Heart right ventricle (tissue), 16 donors: ENCODE measurements at regions of chr2 and their contacts with region 1.

Region 1: DNA sequence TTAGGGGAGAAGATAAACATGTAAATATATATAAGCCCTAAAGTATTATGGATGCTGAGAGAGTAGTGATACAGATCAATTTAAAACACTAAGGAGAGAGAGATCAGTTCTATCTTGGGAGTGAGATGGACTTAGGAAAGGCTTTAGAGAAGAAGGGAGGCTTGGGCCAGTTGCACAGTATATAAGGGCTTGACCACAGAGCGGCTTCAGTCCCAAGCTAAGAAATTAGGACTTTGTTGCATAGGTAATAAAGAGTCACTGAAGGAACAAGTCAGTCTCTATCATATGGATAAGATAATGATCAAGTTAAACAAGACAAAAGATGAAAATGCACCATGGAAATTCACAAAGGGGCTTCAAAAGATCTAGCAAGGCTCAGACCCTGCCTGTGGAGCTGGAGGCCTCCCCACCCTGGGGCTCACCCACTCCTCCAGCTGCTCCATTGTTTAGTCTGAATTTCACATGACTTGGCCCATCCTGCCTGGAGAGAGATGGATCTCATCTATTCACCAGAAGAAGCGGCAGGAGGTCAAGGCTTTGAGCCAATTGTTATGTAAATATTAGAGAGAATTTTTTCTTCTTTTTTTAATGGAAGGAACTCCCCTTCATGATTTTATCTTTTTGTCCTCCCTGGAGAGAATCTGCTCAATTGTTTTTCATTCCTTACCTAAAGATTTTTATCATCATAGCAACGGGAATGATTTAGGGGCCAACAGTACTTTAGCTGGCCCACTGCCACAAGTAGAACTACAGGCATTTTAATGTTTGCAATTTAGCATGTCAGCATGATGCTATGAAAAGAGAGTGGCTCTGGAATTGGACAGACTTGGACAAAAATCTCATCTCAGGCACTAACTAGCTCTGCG is 44.0 kb downstream of the GYPC start:
- DNase-seq: peak in 1 of 2 donors; percentile 51
- ATAC-seq: peak in 6 of 8 donors; percentile 43 to 81 (median 62)
- H3K4me3 ChIP-seq: no peak overlapping the region
- H3K27ac ChIP-seq: peak overlapping the region in 8 of 10 donors; percentile 35 to 80 (median 58)
- H3K4me1 ChIP-seq: peaks cover 8 to 79% (median 33%) of the 10 kb centered on the region in 9 donors
- H3K27me3 ChIP-seq: no peaks in the 10 kb centered on the region
- CTCF ChIP-seq: no peak

Region 2: DNA sequence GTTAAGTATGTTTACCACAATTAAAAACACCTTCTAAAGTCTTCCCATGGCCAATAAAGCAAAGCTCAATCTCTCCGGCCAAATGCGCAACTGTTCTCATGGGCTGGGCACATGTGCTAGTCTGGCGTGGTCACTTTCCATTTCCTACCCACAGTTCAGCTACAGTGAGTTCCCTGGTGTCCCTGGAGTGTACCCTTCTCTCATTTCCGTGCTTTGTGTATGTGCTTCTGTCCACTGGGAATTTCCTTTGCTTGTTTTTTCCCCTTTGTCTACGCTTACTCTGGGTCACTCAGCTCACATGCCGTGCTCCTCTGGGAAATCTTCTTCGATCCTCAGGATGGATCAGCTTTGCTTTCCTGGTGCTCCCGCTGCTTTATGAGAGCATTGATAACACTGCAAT is 113.6 kb before region 1 on chr2:
- intact Hi-C with region 1: loop called in 1 of 10 experiments (anchors 1 kb)
- DNase-seq: peak in 1 of 2 donors; percentile 61
- ATAC-seq: peak; percentile 82 to 99 (median 93)
- H3K4me3 ChIP-seq: no peak overlapping the region
- H3K27ac ChIP-seq: peak overlapping the region in 9 of 10 donors; percentile 32 to 80 (median 68)
- H3K4me1 ChIP-seq: peaks cover 0 to 26% (median 0%) of the 10 kb centered on the region in 9 donors
- H3K27me3 ChIP-seq: peaks cover 0 to 3% (median 0%) of the 10 kb centered on the region in 7 donors
- CTCF ChIP-seq: no peak

Region 3: DNA sequence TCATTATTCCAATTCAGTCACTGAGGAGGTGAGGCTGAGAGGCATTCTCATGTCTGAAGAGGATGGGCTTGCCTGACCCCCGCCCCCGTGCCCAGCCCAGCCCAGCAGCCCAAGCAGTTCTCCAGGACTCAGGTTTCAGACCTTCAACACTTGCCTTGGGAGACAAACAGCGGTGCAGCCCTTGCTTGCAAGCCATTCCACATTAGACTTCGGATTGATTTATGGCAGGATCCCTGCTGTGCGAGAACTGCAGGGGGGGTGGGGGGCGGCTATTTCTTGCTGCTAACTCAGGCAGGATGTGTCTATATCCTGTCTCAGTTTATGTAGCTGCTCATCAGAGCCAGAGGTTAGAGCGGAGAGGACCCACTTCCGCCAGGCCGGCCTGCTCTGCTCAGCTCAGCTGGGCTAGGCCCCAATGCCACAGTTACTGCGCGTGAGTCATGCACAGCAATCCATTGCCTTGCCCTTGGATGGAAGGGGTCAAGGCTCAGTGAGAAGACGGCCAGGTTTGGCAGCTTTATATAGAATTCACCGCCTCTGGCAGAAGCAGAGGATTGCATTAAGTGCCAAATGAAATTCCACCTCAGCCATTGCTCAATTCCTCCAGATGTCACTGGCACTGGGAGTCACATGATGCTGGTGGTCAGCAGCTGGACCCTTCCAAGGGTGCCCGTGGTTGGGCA is 42.2 kb before region 1 on chr2:
- intact Hi-C with region 1: loop called in 4 of 10 experiments (anchors 2 to 5 kb)
- DNase-seq: peak; percentile 76 to 83
- ATAC-seq: peak; percentile 50 to 91 (median 72)
- H3K4me3 ChIP-seq: peak overlapping the region; percentile 67 to 90 (median 77)
- H3K27ac ChIP-seq: peak overlapping the region; percentile 96 to 100 (median 99)
- H3K4me1 ChIP-seq: peaks cover 22 to 77% (median 70%) of the 10 kb centered on the region in 9 donors
- H3K27me3 ChIP-seq: no peaks in the 10 kb centered on the region
- CTCF ChIP-seq: peak in 1 of 9 donors; percentile 6

Region 4: GRCh38 chr2:126664234-126664633 is 35.7 kb before region 1 on chr2:
- intact Hi-C with region 1: loop called in 5 of 10 experiments (anchors 2 to 5 kb)
- DNase-seq: no peak
- ATAC-seq: no peak
- H3K4me3 ChIP-seq: no peak overlapping the region
- H3K27ac ChIP-seq: peak overlapping the region in 9 of 10 donors; percentile 6 to 99 (median 53)
- H3K4me1 ChIP-seq: peaks cover 22 to 97% (median 92%) of the 10 kb centered on the region in 9 donors
- H3K27me3 ChIP-seq: no peaks in the 10 kb centered on the region
- CTCF ChIP-seq: no peak